ENCODE measurements at regions of chr4 and their contacts with region 1.

Region 1: DNA sequence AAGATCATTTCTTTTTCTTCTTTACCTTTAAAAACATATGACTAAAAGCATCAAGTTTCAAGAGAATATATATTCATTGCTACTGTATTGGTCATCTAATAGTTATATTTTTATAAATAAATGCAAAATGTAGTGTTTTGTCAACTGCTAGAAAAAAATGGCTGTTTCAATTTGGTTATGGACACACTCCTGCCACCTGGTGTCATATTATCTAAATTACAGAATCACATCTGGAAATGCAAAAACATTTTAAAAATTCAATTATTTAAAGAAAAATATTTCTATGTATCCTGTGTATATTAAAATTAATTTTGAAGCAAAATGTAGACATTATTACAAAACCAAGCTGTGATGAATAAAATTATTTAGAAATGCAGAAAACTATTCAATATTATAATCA is 329.4 kb upstream of the PCDH18 start:
- DNase-seq: no peak
- ATAC-seq: no peak
- H3K4me3 ChIP-seq: no peak overlapping the region
- H3K27ac ChIP-seq: no peak overlapping the region
- H3K4me1 ChIP-seq: no peaks in the 10 kb centered on the region
- H3K27me3 ChIP-seq: no peaks in the 10 kb centered on the region
- CTCF ChIP-seq: peak in 11 of 12 donors; percentile 26 to 67 (median 45)
- POLR2A ChIP-seq: no peak

Region 2: DNA sequence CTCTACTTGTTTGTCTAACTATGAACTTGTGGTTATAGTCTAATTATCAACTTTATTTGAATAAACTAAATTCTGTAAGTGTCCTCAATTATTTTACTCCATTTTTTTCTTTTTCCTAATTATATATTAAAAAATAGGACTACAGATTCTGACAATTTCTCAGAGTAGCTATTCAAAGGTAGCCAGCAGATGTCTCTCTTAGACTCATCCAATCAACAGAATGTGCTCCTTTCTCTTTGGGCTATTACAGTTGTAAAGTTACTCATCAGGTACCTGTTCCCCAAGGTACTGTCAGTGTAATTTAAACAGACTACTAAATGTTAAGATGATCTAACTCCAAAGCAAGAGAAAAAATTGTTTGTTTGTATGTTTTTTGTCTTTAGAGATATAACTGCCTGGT is 577.9 kb before region 1 on chr4:
- intact Hi-C with region 1: loop called in 2 of 10 experiments (anchors 10 kb)
- DNase-seq: no peak
- ATAC-seq: no peak
- H3K4me3 ChIP-seq: no peak overlapping the region
- H3K27ac ChIP-seq: no peak overlapping the region
- H3K4me1 ChIP-seq: no peaks in the 10 kb centered on the region
- H3K27me3 ChIP-seq: no peaks in the 10 kb centered on the region
- CTCF ChIP-seq: peak in 9 of 12 donors; percentile 14 to 48 (median 30)
- POLR2A ChIP-seq: no peak

Region 3: DNA sequence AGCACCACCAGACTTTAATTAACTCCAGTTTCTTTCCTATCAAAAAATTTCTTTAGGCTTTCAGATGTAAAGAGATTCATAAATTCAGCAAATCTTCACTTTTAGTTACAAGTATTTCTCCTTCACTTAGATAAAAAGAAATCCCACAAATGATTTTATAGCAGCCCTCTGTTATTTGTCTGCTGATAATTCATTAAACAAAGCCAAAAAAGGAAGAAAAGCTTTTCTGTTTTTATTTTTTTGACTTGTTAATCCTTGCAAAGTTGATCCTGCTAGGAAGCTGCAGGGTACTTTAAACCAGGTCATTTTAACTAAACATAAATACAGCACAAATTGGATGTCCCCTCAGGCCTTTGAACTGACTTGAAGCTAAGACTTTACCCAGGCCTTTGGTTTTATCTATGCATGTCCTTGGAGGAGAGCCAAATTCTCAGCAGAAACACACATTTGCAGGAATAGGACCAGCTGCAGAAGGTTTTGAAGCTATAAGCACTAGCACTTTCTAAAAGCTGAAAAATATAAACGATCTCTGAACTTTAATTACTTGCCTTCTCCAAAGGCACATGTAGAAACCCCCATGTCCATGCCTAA is 386.9 kb before region 1 on chr4:
- intact Hi-C with region 1: no loop called
- DNase-seq: no peak
- ATAC-seq: no peak
- H3K4me3 ChIP-seq: no peak overlapping the region
- H3K27ac ChIP-seq: peak overlapping the region in 2 of 12 donors; percentile 9 to 26
- H3K4me1 ChIP-seq: peaks cover 0 to 10% (median 1%) of the 10 kb centered on the region in 12 donors
- H3K27me3 ChIP-seq: no peaks in the 10 kb centered on the region
- CTCF ChIP-seq: no peak
- POLR2A ChIP-seq: no peak

Measured in heart left ventricle (tissue), 16 donors.